Mammary epithelial cell (primary cell): ENCODE measurements at regions of chr21 and their contacts with region 1.

Region 1: GRCh38 chr21:42537106-42537742 is 23.6 kb downstream of the SLC37A1 start:
- DNase-seq: no peak
- H3K4me3 ChIP-seq: no peak overlapping the region
- H3K27ac ChIP-seq: no peak overlapping the region
- H3K4me1 ChIP-seq: no peaks in the 10 kb centered on the region
- H3K27me3 ChIP-seq: no peaks in the 10 kb centered on the region
- CTCF ChIP-seq: peak; percentile 20 to 43

Region 2: DNA sequence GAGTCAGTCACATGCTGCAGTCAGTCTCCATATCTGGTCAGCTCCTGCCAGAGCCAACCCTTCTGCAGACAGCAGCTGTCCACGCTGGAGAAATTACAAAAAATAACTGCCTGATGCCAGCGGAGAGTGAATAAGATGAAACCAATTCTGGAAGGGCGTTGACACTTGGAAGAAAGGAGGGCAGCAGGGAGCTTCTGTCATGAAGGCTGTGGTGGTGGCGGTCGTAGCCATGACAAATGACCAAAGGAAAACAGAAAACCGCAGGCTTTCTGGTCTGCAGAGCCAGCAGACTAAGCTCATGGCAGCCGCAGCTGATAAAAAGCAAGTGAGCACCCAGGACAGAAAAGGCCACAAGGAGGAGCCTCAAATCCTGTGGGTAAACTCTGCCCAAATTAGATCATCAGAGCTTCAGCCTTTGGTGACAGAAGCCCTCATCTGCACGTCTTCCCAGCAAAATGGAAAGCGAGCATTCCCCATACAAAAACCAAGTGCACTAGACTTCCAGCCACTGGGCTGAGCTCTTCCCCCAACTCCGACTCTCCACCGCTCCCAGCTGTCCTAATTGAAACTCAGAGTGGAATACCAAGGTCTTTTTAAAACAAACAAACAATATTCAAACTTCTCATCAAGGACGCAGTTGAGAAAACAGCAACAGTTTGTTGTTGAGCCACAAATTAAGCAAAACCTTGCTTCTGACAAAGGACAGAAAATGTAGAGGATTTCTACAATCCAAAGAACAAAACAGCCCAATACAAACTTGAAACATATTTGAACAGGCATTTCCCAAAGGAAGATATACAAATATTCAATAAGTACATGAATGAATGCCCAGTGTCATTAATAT is 69.9 kb before region 1 on chr21:
- CTCF ChIA-PET with region 1: no interaction called
- dilution Hi-C with region 1: no loop called
- in situ Hi-C with region 1: no loop called
- intact Hi-C with region 1: loop called (anchors 1 kb)
- DNase-seq: no peak
- H3K4me3 ChIP-seq: no peak overlapping the region
- H3K27ac ChIP-seq: no peak overlapping the region
- H3K4me1 ChIP-seq: no peaks in the 10 kb centered on the region
- H3K27me3 ChIP-seq: no peaks in the 10 kb centered on the region
- CTCF ChIP-seq: peak; percentile 10 to 38